Activated CD8-positive, alpha-beta memory T cell treated with anti-CD3 and anti-CD28 coated beads, Interleukin-2, amount 10 ng/mL, durations not matched to agents 7 days and 5 days (primary cell): ENCODE measurements at regions of chr4 and their contacts with region 1.

Region 1: DNA sequence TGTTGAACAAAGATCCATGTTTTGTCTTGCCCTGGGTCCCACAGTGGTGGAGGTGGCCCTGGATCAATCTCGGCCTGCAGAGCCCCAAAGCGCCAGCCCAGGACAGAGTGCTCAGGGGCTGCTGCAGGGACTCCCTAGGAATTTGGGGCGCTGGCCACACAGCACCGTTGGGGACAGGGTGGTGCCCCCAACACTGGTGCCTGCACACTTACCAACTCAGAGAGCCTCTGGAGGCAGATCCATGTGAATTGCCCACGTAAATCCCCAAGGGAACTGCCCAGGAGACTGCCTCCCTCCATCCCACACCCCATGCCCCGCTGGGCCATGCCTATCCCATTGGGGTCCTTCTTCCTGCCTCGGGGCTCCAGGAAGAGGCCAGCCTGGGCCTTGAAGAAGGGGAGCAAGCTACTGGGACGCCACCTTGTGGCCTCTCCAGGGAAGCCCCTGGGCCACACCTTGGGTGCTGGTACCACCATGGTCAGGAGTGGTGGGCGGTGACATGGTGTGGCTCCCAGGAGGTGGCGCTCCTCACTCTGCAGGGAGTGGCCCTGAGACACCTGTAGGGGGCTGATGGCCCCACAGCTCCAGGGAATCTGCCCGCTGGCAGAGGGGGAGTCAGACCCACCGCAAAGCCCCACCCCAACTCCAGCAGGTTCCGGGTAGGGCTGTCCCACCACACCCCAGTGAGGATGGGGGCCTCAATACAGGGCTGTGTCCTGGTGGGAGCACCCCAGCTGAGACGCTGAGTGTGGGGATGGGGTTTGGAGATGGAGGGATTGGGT is 22.8 kb downstream of the CFAP99 start:
- DNase-seq: peak; percentile 88
- ATAC-seq: peak; percentile 96
- H3K4me3 Mint-ChIP-seq: no peak overlapping the region
- H3K27ac Mint-ChIP-seq: no peak overlapping the region
- H3K4me1 Mint-ChIP-seq: peaks cover 3% of the 10 kb centered on the region
- H3K27me3 Mint-ChIP-seq: no peaks in the 10 kb centered on the region

Region 2: GRCh38 chr4:2412885-2413716 is 28.5 kb before region 1 on chr4:
- CTCF ChIA-PET with region 1: interaction called, 15 read pairs
- DNase-seq: peak; percentile 98
- ATAC-seq: peak; percentile 81
- H3K4me3 Mint-ChIP-seq: peak overlapping the region; percentile 63
- H3K27ac Mint-ChIP-seq: peak overlapping the region; percentile 97
- H3K4me1 Mint-ChIP-seq: peaks cover 73% of the 10 kb centered on the region
- H3K27me3 Mint-ChIP-seq: peaks cover 10% of the 10 kb centered on the region

Region 3: GRCh38 chr4:2428496-2429213 is 12.9 kb before region 1 on chr4:
- CTCF ChIA-PET with region 1: interaction called, 16 read pairs
- DNase-seq: no peak
- ATAC-seq: no peak
- H3K4me3 Mint-ChIP-seq: no peak overlapping the region
- H3K27ac Mint-ChIP-seq: no peak overlapping the region
- H3K4me1 Mint-ChIP-seq: no peaks in the 10 kb centered on the region
- H3K27me3 Mint-ChIP-seq: no peaks in the 10 kb centered on the region

Region 4: DNA sequence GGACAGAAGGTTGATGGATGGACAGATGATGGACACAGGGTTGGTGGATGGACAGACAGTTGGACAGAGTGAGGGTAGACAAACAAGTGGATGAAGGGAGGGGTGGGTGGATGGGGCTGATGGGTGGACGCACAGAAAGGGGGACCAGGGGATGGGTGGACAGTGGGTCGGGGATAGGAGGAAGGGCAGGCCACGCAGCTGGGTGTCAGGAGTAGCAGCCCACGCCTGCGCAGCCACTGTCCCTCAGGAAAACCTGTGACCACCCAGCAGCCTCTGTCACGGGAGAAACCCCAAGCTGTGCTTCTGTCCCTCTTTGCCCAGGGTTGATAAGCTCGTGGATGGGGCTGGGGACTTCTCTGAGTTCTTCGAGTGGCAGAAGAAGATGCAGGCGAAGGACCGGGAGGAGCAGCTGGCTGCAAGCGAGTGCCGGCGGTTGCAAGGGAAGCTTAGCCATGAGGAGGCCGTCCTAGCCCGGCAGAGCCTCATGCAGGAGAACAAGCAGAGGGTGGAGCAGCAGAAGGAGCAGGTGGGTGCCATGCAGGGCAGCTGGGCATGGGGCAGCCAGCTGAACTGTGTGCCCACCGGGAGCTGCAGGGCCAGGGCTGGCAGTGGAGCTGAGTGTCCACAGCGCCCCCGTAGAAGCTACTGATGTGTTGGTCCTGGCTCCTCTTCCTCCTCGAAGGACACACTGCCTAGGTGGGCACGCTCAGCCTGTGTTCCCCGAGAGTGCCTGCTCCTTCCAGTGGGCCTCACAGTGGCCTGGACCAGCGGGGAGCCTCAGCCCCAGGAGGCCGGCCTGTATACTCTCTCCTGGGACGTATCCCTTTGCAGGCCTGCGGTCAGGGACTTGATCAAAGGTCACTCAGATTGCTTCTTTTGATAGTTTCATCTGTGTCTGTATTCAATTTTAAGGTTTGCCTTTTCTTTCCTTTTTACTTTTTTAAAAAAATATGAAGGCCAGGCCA is 10.5 kb after region 1 on chr4:
- CTCF ChIA-PET with region 1: interaction called, 10 read pairs
- DNase-seq: no peak
- ATAC-seq: no peak
- H3K4me3 Mint-ChIP-seq: no peak overlapping the region
- H3K27ac Mint-ChIP-seq: no peak overlapping the region
- H3K4me1 Mint-ChIP-seq: no peaks in the 10 kb centered on the region
- H3K27me3 Mint-ChIP-seq: no peaks in the 10 kb centered on the region

Region 5: DNA sequence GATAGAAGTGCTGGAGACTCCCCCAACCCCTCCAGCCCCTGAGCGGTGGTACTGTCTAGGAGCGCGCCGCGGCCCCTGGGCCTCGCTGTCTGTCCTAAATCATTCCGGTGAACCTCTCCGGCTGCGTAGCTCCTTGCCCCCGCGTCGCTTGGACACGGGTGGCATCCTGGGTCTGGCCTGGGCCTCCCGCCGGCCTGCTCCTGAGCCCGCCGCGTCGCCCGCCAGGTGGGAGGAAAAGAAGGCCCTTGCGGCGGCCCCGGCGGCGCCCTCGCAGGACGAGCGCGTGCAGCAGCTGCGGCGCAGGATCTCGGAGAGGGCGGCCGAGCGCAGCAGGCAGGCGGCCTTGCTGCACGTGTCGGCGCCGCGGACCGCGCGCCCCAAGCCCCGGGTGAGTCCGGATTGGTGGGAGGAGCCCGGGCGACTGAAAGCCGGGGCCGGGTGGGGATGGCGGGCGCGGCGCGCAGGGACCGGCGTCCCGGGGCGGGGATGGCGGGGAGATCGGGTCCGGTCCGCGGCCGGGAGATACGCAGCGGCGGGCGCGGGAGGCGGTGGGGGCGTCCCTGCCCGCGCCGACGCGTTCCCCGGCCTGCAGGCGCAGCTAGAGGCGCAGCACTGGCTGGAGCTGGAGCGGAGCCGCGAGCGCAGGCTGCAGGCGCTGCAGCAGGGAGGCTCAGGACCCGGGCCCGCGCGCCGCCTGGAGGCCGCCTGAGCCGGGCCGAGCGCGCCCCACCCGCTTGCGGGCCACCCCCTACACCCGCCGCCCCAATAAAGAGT is 20.8 kb after region 1 on chr4:
- CTCF ChIA-PET with region 1: interaction called, 17 read pairs
- DNase-seq: peak; percentile 70
- ATAC-seq: peak; percentile 97
- H3K4me3 Mint-ChIP-seq: peak overlapping the region; percentile 47
- H3K27ac Mint-ChIP-seq: no peak overlapping the region
- H3K4me1 Mint-ChIP-seq: peaks cover 17% of the 10 kb centered on the region
- H3K27me3 Mint-ChIP-seq: peaks cover 14% of the 10 kb centered on the region